Adrenal gland (tissue), 19 donors: ENCODE measurements at regions of chr16 and their contacts with region 1.

Region 1: GRCh38 chr16:10964039-10964890 is 19.9 kb downstream of the CLEC16A start:
- DNase-seq: peak; percentile 80 to 93 (median 87)
- H3K4me3 ChIP-seq: no peak overlapping the region
- H3K27ac ChIP-seq: peak overlapping the region in 1 of 5 donors; percentile 31
- H3K4me1 ChIP-seq: peaks cover 6 to 19% of the 10 kb centered on the region in 2 donors
- H3K27me3 ChIP-seq: no peaks in the 10 kb centered on the region
- CTCF ChIP-seq: peak; percentile 89 to 96 (median 93)
- POLR2A ChIP-seq: no peak

Region 2: DNA sequence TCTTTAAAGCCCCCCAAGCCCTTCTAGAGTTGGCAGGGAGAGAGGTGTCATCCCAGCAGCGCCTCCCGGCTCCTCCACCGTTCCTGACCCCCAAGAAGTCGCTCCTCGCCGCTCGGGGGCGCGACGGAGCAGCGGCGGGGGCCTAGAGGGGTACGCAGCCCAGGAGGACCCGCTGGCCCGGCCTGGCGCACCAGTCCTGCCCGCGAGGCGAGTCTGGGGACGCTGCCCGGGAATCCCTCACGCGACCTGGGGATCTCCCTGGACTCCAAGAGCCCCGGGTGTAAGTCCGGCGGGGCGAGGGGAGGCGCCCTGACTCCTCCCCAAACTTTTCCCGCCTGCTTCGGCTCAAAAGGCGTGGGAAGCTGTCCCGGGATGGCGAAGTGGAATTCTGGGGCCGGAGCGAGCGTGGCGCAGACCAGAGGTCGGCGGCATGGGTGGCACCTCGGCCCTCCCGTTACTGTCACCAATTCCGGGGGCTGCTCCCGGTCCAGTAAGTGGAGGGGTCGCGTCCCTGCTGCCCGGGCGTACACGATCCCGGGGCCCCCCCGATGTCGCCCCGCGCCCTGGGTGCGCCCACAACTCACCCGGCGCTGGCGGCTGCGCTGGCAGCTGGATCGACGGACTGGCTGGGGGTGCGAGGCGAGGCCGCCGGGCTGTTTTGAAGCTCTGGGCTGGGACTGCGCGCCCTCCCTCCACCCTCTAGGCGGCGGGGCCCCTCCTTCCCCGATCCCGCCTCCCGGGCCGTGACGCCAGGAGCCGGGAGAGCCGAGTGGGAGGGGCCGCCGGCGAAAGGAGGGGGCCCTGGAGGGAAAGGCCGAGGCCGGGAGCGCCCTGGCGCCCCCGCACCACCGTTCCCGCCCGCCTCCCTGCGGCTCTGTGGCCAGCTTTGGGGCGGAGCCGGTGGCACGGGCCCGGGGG is 384.0 kb before region 1 on chr16 and contains the start of gene EMP2:
- intact Hi-C with region 1: no loop called
- DNase-seq: peak; percentile 43 to 67 (median 60)
- H3K4me3 ChIP-seq: peak within 1 kb of the TSS; percentile 19 to 86 (median 55)
- H3K27ac ChIP-seq: peak within 1 kb of the TSS in 3 of 5 donors; percentile 40 to 87 (median 78)
- H3K4me1 ChIP-seq: peaks cover 5 to 28% of the 10 kb centered on the region in 2 donors
- H3K27me3 ChIP-seq: no peaks in the 10 kb centered on the region
- CTCF ChIP-seq: peak in 3 of 6 experiments; percentile 20 to 51 (median 33)
- POLR2A ChIP-seq: no peak
- total RNA-seq, gene EMP2: 6.2 to 34.0 (median 15.4) TPM

Region 3: GRCh38 chr16:10839279-10839666 is 125.0 kb before region 1 on chr16:
- intact Hi-C with region 1: no loop called
- DNase-seq: peak in 2 of 7 donors; percentile 26 to 31
- H3K4me3 ChIP-seq: no peak overlapping the region
- H3K27ac ChIP-seq: no peak overlapping the region
- H3K4me1 ChIP-seq: peaks cover 9 to 10% of the 10 kb centered on the region in 2 donors
- H3K27me3 ChIP-seq: no peaks in the 10 kb centered on the region
- CTCF ChIP-seq: no peak
- POLR2A ChIP-seq: no peak

Region 4: DNA sequence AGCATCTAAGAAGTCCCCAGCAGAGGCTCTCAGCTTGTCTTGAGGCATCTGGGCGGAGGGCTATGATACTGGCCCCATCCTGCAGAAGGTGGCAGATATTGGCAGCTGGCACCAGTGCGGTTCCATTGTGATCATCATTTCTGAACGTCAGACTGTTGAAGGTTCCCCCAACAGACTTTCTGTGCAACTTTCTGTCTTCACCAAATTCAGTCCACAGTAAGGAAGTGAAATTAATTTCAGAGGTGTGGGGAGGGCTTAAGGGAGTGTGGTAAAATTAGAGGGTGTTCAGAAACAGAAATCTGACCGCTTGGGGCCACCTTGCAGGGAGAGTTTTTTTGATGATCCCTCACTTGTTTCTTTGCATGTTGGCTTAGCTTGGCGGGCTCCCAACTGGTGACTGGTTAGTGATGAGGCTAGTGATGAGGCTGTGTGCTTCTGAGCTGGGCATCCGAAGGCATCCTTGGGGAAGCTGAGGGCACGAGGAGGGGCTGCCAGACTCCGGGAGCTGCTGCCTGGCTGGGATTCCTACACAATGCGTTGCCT is 87.4 kb before region 1 on chr16 and contains the start of gene CIITA:
- intact Hi-C with region 1: no loop called
- DNase-seq: peak; percentile 61 to 89 (median 82)
- H3K4me3 ChIP-seq: no peak within 1 kb of the TSS
- H3K27ac ChIP-seq: peak within 1 kb of the TSS in 1 of 5 donors; percentile 67
- H3K4me1 ChIP-seq: peaks cover 7 to 8% of the 10 kb centered on the region in 2 donors
- H3K27me3 ChIP-seq: no peaks in the 10 kb centered on the region
- CTCF ChIP-seq: no peak
- POLR2A ChIP-seq: no peak
- total RNA-seq, gene CIITA: 1.3 to 48.1 (median 19.5) TPM

Region 5: DNA sequence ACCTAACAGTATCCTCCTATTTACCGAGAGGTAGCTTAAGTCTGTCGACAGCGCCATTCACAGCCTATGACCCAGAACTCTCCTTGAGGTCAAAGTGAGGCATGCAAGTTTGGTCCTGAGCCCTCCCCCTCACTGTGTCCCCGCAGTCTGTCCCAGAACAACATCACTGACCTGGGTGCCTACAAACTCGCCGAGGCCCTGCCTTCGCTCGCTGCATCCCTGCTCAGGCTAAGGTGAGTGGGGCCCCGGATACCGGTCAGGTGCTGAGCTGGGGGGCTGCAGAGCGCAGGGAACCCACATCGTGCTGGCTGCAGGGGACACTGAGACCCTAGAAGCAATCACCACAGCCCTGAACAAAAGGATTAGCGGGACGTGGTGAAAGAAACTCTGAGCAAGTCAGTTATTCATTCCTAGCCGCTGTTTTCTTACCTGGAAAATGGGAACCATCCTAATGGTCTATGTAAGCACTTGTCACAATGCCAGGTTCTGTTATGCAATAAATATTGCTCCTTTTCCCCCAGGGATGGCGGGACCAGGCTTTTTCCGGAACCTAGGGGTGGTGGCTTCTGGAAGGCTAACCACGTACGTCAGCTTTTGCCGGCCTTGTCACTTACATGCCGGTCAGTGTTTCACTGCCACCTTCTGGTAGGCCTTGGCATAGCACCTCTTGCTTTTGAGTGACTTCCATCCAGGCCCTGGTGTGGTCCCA is 45.8 kb before region 1 on chr16:
- intact Hi-C with region 1: no loop called
- DNase-seq: peak; percentile 94 to 99 (median 98)
- H3K4me3 ChIP-seq: no peak overlapping the region
- H3K27ac ChIP-seq: peak overlapping the region in 1 of 5 donors; percentile 64
- H3K4me1 ChIP-seq: peaks cover 27 to 35% of the 10 kb centered on the region in 2 donors
- H3K27me3 ChIP-seq: no peaks in the 10 kb centered on the region
- CTCF ChIP-seq: peak; percentile 95 to 98 (median 96)
- POLR2A ChIP-seq: no peak

Region 6: GRCh38 chr16:11345040-11345862 is 381.0 kb after region 1 on chr16 and contains the start of gene RMI2:
- intact Hi-C with region 1: loop called in 1 of 2 experiments (anchors 5 kb)
- DNase-seq: peak; percentile 96 to 98 (median 97)
- H3K4me3 ChIP-seq: peak within 1 kb of the TSS in 3 of 4 donors; percentile 38 to 94 (median 40)
- H3K27ac ChIP-seq: no peak within 1 kb of the TSS
- H3K4me1 ChIP-seq: peaks cover 16 to 17% of the 10 kb centered on the region in 2 donors
- H3K27me3 ChIP-seq: no peaks in the 10 kb centered on the region
- CTCF ChIP-seq: peak in 1 of 6 experiments; percentile 19
- POLR2A ChIP-seq: peak in 1 of 2 donors; percentile 46
- total RNA-seq, gene RMI2: 0.70 to 21.1 (median 1.5) TPM in 7 of 9 donors, not detected in the others

Region 7: DNA sequence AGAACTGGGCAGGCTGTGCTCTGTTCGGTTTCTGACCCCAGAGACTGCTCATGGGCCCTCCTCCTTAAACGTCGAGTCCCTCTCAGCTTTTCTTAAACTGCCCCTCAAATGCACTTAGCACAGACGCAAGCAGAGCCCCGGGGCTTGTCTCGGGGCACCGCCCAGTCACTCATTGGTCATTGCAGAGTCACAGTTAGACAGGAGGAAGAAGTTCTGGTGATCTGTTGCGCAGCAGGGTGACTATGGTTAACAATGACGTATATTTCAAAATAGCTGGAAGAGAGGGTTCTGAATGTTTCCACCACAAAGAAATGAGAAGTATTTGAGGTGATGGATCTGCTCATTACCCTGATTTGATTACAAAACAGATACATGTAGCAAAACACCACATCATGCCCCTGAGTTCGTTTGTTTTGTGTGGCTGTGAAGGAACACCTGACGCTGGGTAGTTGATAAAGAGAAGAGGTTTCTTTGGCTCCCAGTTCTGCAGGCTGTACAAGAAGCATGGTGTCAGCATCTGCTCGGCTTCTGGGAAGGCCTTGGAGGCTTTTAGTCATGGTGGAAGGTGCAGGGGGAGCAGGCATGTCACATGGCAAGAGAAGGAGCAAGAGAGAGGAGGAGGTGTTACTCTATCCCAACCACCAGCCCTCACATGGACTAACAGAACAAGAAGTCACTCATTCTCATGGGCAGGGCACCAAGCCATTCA is 1452.0 kb after region 1 on chr16:
- intact Hi-C with region 1: loop called in 1 of 2 experiments (anchors 10 kb)
- DNase-seq: no peak
- H3K4me3 ChIP-seq: no peak overlapping the region
- H3K27ac ChIP-seq: no peak overlapping the region
- H3K4me1 ChIP-seq: no peaks in the 10 kb centered on the region
- H3K27me3 ChIP-seq: no peaks in the 10 kb centered on the region
- CTCF ChIP-seq: no peak
- POLR2A ChIP-seq: no peak